ENCODE measurements at regions of chr1 and their contacts with region 1.

Region 1: DNA sequence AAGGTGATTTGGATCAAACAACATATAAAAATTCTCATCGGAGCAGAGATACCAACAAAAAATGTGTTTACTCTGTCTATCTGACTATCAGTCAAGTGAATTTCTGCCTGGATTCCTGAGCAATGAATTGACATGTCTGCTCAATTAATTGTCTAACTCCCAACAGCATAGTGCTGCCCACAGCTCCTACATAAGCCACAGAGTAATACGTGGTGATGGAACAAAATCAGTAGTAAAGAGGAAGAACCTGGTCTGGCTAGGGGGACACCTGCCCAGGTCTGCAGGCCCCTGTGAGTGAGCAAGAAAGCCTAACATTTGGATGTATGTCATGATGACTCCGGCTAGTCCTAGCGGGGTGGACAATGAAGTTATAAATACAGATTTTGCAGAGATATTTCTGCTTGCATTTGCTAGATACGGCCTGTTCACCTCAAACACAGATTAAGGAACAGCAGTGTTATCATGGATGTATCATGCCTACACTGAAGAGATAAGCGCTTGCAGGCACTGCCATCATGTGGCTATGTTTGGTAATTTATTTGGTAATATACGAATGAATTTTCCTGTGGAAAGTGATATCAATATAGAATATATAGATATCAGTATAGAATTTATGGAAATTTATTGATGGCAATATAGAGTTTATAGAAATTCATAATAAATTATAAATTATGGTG is 69.6 kb upstream of the LRRC8B start:
- DNase-seq: peak in 1 of 2 experiments; percentile 52
- H3K4me3 ChIP-seq: no peak overlapping the region
- H3K27ac ChIP-seq: no peak overlapping the region
- H3K4me1 ChIP-seq: peaks cover 0 to 5% (median 4%) of the 10 kb centered on the region in 4 experiments; a peak in 4 of 7 replicates
- H3K27me3 ChIP-seq: no peaks in the 10 kb centered on the region
- CTCF ChIP-seq: peak in 2 of 3 experiments; percentile 58 to 61; a peak in 3 of 4 replicates
- EP300 ChIP-seq: no peak
- POLR2A ChIP-seq: no peak
- RAD21 ChIP-seq: peak; percentile 92

Region 2: DNA sequence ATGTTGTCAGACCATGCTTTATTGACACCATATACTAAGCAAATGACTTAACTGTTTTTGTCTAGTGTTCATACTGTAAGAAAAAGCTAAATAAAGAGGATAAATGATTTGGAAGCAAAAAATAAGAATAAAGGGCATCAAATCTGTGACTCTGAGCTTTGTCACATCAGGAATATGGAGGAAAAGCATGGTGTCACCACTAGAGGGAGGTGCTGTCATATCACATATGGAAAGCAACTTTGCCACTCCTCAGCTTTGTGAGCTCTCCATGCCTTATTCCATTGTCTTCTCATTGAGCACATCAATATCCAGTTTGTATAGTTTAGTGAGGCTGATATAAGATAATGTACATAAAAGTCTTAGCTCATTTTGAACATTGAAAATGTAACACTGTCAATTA is 369.2 kb before region 1 on chr1:
- CTCF ChIA-PET with region 1: interaction called, 11 read pairs
- POLR2A ChIA-PET with region 1: no interaction called
- DNase-seq: no peak
- H3K4me3 ChIP-seq: no peak overlapping the region
- H3K27ac ChIP-seq: no peak overlapping the region
- H3K4me1 ChIP-seq: 0 out of 7 replicates have a peak, but pooled peaks cover 0 to 3% (median 0%) of the 10 kb centered on the region in 4 experiments
- H3K27me3 ChIP-seq: no peaks in the 10 kb centered on the region
- CTCF ChIP-seq: peak in 2 of 3 experiments; percentile 60 to 65; a peak in 3 of 4 replicates
- EP300 ChIP-seq: no peak
- POLR2A ChIP-seq: no peak
- RAD21 ChIP-seq: peak; percentile 84 to 85

Region 3: GRCh38 chr1:89358287-89358893 is 96.6 kb before region 1 on chr1:
- CTCF ChIA-PET with region 1: interaction called, 10 read pairs
- POLR2A ChIA-PET with region 1: no interaction called
- DNase-seq: peak; percentile 23 to 86
- H3K4me3 ChIP-seq: no peak overlapping the region
- H3K27ac ChIP-seq: no peak overlapping the region
- H3K4me1 ChIP-seq: 0 out of 7 replicates have a peak, but pooled peaks cover 0 to 2% (median 0%) of the 10 kb centered on the region in 4 experiments
- H3K27me3 ChIP-seq: no peaks in the 10 kb centered on the region
- CTCF ChIP-seq: peak; percentile 53 to 87 (median 87)
- EP300 ChIP-seq: no peak
- POLR2A ChIP-seq: no peak
- RAD21 ChIP-seq: peak; percentile 90 to 91